B cell (primary cell): ENCODE measurements at regions of chr6 and their contacts with region 1.

Region 1: DNA sequence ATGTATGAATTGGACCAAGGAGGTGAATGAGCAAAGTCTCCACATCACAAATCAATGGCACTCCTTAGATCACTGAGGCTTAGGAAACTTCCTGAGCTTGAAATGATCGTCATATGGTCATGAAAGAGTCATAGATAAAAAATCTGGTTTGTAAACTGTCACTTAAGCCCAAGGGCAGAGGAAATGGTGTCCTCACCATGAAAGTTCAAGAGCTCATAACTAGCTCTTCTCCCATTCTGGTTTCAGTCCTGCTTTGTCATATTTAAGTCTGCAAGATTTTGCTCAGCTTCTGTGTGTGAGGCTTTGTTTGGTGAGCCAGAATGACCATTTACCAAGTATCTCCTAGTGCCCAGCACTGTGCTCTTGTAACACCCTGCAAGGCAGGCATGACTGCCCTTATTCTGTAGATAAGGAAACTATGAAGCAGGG is 60.5 kb downstream of the GJA10 start:
- DNase-seq: no peak
- ATAC-seq: no peak
- H3K4me3 ChIP-seq: no peak overlapping the region
- H3K4me3 Mint-ChIP-seq: no peak overlapping the region
- H3K27ac ChIP-seq: peak overlapping the region in 1 of 2 donors; percentile 50
- H3K27ac Mint-ChIP-seq: peak overlapping the region; percentile 68
- H3K4me1 ChIP-seq: peaks cover 21 to 22% of the 10 kb centered on the region in 2 donors
- H3K4me1 Mint-ChIP-seq: peaks cover 45% of the 10 kb centered on the region
- H3K27me3 ChIP-seq: no peaks in the 10 kb centered on the region
- H3K27me3 Mint-ChIP-seq: no peaks in the 10 kb centered on the region
- CTCF ChIP-seq: no peak

Region 2: DNA sequence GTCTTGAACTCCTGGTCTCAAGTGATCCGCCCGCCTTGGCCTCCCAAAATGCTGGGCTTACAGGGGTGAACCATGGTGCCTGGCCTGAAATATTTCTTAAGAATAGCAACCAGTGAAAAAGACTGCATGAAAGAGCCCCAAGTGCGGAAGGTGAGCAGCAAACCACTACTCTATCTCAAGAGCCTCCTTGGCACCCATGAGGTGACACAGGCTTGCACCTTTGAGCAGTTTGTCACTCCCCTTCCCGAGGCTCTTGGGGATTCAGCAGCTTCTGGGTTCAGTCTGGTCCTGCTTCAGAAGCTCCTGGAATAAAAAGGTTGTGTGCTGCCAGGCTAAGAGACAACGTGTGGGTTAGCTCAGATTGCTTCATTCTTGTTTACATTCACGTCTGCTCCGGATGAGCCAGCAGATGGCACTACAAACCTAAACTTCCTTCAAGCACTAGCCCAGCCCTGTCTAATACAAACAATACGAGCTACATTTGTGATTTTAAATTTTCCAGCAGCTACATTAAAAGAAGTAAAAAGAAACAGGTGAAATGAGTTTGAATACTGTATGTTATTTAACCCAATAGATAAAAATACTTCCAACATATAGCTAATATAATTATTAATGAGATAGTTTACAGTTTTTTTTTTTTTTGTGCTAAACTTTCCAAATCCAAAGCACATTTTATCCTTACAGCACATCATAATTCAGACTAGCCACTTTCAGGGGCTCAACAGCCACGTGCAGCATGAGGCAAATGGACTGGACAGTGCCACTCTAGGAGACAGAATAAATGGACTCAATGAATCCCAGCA is 14.3 kb before region 1 on chr6:
- CTCF ChIA-PET with region 1: interaction called, 18 read pairs
- POLR2A ChIA-PET with region 1: no interaction called
- intact Hi-C with region 1: no loop called
- DNase-seq: peak; percentile 68
- ATAC-seq: peak; percentile 81
- H3K4me3 ChIP-seq: no peak overlapping the region
- H3K4me3 Mint-ChIP-seq: no peak overlapping the region
- H3K27ac ChIP-seq: no peak overlapping the region
- H3K27ac Mint-ChIP-seq: peak overlapping the region; percentile 64
- H3K4me1 ChIP-seq: no peaks in the 10 kb centered on the region
- H3K4me1 Mint-ChIP-seq: peaks cover 7% of the 10 kb centered on the region
- H3K27me3 ChIP-seq: no peaks in the 10 kb centered on the region
- H3K27me3 Mint-ChIP-seq: no peaks in the 10 kb centered on the region
- CTCF ChIP-seq: peak; percentile 79